MCF 10A (cell line): ENCODE measurements at regions of chr2 and their contacts with region 1.

Region 1: GRCh38 chr2:121095257-121096080 is 189.5 kb downstream of the TFCP2L1 start:
- DNase-seq: peak; percentile 81
- H3K4me3 Mint-ChIP-seq: no peak overlapping the region
- H3K27ac Mint-ChIP-seq: no peak overlapping the region
- H3K4me1 Mint-ChIP-seq: peaks cover 26% of the 10 kb centered on the region
- H3K27me3 Mint-ChIP-seq: no peaks in the 10 kb centered on the region
- CTCF ChIP-seq: peak; percentile 94

Region 2: GRCh38 chr2:120779781-120780283 is 315.6 kb before region 1 on chr2:
- CTCF ChIA-PET with region 1: no interaction called
- POLR2A ChIA-PET with region 1: no interaction called
- intact Hi-C with region 1: no loop called
- DNase-seq: no peak
- H3K4me3 Mint-ChIP-seq: no peak overlapping the region
- H3K27ac Mint-ChIP-seq: no peak overlapping the region
- H3K4me1 Mint-ChIP-seq: peaks cover 16% of the 10 kb centered on the region
- H3K27me3 Mint-ChIP-seq: no peaks in the 10 kb centered on the region
- CTCF ChIP-seq: no peak

Region 3: GRCh38 chr2:121242175-121242875 is 146.9 kb after region 1 on chr2:
- CTCF ChIA-PET with region 1: interaction called, 12 read pairs
- POLR2A ChIA-PET with region 1: no interaction called
- intact Hi-C with region 1: no loop called
- DNase-seq: no peak
- H3K4me3 Mint-ChIP-seq: no peak overlapping the region
- H3K27ac Mint-ChIP-seq: no peak overlapping the region
- H3K4me1 Mint-ChIP-seq: no peaks in the 10 kb centered on the region
- H3K27me3 Mint-ChIP-seq: no peaks in the 10 kb centered on the region
- CTCF ChIP-seq: no peak

Region 4: GRCh38 chr2:121297217-121297830 is 201.9 kb after region 1 on chr2:
- CTCF ChIA-PET with region 1: interaction called, 10 read pairs
- POLR2A ChIA-PET with region 1: interaction called, 3 read pairs
- intact Hi-C with region 1: no loop called
- DNase-seq: peak; percentile 59
- H3K4me3 Mint-ChIP-seq: no peak overlapping the region
- H3K27ac Mint-ChIP-seq: no peak overlapping the region
- H3K4me1 Mint-ChIP-seq: peaks cover 11% of the 10 kb centered on the region
- H3K27me3 Mint-ChIP-seq: no peaks in the 10 kb centered on the region
- CTCF ChIP-seq: peak; percentile 47

Region 5: GRCh38 chr2:121345887-121346286 is 250.4 kb after region 1 on chr2:
- CTCF ChIA-PET with region 1: interaction called, 356 read pairs
- POLR2A ChIA-PET with region 1: no interaction called
- intact Hi-C with region 1: no loop called
- DNase-seq: no peak
- H3K4me3 Mint-ChIP-seq: no peak overlapping the region
- H3K27ac Mint-ChIP-seq: no peak overlapping the region
- H3K4me1 Mint-ChIP-seq: peaks cover 15% of the 10 kb centered on the region
- H3K27me3 Mint-ChIP-seq: no peaks in the 10 kb centered on the region
- CTCF ChIP-seq: no peak